HCT116 (cell line): ENCODE measurements at regions of chr1 and their contacts with region 1.

Region 1: GRCh38 chr1:226634166-226634588 is 85.6 kb downstream of the STUM start:
- DNase-seq: peak; percentile 39
- ATAC-seq: peak; percentile 94
- H3K4me3 ChIP-seq: no peak overlapping the region
- H3K27ac ChIP-seq: no peak overlapping the region
- H3K4me1 ChIP-seq: peaks cover 7 to 18% of the 10 kb centered on the region in 2 experiments; a peak in 3 of 4 replicates
- H3K27me3 ChIP-seq: 0 out of 2 replicates have a peak, but pooled peaks cover 3% of the 10 kb centered on the region
- CTCF ChIP-seq: peak; percentile 92 to 93 (median 92)
- POLR2A ChIP-seq: no peak
- RAD21 ChIP-seq: peak; percentile 99

Region 2: DNA sequence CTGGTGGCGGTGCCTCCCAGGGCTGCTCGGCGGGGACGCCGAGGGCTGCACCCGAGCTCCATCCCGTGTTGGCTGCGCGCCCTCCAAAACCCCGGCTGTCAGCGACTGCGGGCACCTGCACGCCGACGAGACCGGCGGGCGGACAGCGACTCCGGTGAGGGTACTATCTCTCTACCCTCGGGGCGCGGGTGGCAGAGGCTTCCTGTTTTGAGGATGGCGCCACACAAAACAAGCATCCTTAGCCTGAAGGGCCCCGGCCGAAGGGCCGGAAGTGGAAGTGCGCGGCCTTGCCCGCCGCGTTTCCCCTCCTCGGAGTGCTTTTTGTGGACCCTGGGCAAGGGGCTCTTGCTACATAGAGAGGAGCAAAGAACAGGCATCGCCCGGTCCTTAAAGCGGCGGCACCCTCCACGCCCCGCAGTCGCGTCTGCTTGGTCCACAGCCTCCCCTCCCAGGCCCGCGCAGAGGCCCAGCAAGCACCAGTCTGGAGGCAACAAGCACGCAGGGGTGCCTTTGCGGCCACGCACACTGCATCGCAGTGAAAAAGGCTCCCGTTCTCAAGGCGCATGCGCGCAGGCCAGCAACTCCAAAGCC is 305.4 kb after region 1 on chr1:
- CTCF ChIA-PET with region 1: no interaction called
- POLR2A ChIA-PET with region 1: no interaction called
- RAD21 ChIA-PET with region 1: no interaction called
- intact Hi-C with region 1: loop called (anchors 10 kb)
- DNase-seq: no peak
- ATAC-seq: peak; percentile 35
- H3K4me3 ChIP-seq: peak overlapping the region; percentile 64 to 66
- H3K27ac ChIP-seq: peak overlapping the region; percentile 87
- H3K4me1 ChIP-seq: peaks cover 5 to 29% of the 10 kb centered on the region in 2 experiments
- H3K27me3 ChIP-seq: no peaks in the 10 kb centered on the region
- CTCF ChIP-seq: no peak
- POLR2A ChIP-seq: peak; percentile 96
- RAD21 ChIP-seq: no peak